Caco-2 (cell line): ENCODE measurements at regions of chr12 and their contacts with region 1.

Region 1: DNA sequence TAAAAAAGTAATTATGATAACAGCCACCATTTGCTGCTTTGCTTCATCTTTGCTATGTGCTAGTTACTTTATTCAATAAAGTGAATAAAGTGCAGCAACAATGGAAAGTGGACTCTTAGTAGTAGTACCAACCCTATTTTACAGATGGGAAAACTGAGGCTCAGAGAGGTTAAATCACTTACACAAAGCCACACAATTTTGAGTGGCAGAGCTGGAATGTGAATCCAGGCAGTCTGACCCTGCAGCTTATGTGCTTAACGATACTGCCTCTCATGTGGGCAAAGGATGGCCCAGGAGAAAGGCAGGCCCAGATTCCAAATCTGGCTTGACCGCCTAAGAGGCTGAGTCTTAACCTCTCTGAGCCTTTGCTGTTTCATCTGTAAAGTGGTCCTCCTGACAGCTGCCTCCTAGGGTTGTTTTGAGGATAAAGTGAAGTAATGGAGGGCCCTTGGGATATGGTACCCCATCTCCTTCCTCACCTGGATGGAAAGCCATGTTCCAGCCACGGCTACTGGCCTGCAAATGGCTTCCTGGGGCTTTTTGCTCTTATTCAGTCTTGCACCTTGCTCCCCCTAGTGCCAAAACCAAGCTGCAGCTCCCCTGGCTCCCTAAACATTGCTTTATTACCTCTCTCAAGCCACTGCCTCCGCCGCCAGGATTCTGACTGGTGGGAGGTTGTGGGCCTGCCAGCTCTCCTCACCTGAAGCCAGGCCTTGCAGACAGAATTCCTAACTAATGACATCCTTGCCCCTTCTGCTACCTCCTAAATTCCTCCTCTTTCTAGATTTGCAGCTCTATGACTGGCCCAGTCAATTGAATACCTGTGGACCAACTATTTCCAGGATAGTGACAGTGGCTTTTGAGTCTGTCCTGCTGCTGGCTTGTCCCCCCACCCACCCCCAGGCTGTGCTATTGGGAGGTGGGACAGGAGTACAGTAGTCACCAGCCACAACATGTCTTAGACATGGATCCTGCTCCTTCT is 283.3 kb upstream of the PWP1 start:
- DNase-seq: peak; percentile 59 to 66
- H3K4me3 ChIP-seq: no peak overlapping the region
- H3K4me3 Mint-ChIP-seq: no peak overlapping the region
- H3K27ac Mint-ChIP-seq: no peak overlapping the region
- H3K4me1 ChIP-seq: no peaks in the 10 kb centered on the region
- H3K4me1 Mint-ChIP-seq: no peaks in the 10 kb centered on the region
- H3K27me3 ChIP-seq: no peaks in the 10 kb centered on the region
- H3K27me3 Mint-ChIP-seq: peaks cover 3% of the 10 kb centered on the region
- CTCF ChIP-seq: peak; percentile 58 to 67

Region 2: DNA sequence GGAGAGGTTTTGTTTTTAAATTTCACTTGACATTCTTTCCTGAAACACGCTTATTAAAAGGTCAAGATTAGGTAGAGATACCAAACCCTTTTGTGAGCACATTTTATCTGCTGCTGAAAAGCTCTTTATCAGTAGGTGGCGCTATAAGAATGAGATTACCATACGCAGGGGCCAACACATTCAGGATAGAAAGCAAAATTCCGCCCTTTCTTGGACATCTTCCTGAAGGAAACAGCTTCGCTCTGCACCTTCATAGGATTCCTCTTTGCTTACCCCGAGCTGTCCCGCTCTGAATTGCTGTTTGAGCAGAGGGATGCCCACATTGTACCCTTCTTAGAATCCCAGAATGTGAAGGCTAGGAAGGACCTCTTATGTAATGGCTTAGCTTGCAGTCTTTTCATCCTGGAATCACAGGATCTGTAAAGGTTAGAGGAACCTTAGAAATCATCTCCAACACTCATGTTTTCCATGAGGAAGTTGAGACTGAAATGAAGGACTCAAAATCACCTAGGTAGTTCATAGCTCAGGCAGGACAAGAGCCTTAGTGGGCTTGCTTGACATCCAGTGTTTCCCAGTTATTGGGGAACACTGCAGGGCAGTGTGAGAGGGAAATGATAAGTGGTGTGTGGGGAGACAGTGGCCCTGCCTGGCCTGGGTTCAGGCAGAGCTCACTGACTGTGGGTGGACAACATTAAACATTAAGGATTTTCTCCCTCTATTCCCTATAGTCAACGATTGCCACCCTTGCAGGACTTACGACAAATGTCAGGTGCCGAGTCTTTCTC is 270.3 kb before region 1 on chr12:
- CTCF ChIA-PET with region 1: interaction called, 8 read pairs
- POLR2A ChIA-PET with region 1: no interaction called
- intact Hi-C with region 1: loop called (anchors 1 kb)
- DNase-seq: peak in 1 of 2 experiments; percentile 60
- H3K4me3 ChIP-seq: no peak overlapping the region
- H3K4me3 Mint-ChIP-seq: no peak overlapping the region
- H3K27ac Mint-ChIP-seq: no peak overlapping the region
- H3K4me1 ChIP-seq: no peaks in the 10 kb centered on the region
- H3K4me1 Mint-ChIP-seq: no peaks in the 10 kb centered on the region
- H3K27me3 ChIP-seq: no peaks in the 10 kb centered on the region; the same call in 1 of the 2 replicates
- H3K27me3 Mint-ChIP-seq: peaks cover 3% of the 10 kb centered on the region
- CTCF ChIP-seq: peak; percentile 74 to 80

Region 3: DNA sequence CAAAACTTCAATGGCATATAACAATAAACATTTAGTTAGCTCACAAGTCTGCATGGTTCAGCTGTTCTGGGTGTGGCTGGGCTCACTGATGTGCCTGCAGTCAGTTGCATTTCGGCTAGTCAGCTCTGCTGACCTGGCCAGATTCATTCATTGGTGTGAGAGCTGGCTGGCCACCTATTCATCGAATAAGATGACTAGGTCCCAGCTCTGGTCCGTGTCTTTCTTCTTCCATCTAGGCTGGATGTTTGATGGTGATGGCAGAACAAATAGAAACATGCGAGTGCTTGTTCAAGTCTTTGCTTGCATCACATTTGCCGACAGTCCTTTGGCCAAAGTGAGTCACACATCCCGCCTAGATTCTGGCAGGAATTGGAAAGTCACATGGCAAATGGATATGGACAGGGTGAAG is 105.6 kb before region 1 on chr12:
- CTCF ChIA-PET with region 1: interaction called, 10 read pairs
- POLR2A ChIA-PET with region 1: no interaction called
- intact Hi-C with region 1: no loop called
- DNase-seq: no peak
- H3K4me3 ChIP-seq: no peak overlapping the region
- H3K4me3 Mint-ChIP-seq: no peak overlapping the region
- H3K27ac Mint-ChIP-seq: no peak overlapping the region
- H3K4me1 ChIP-seq: no peaks in the 10 kb centered on the region
- H3K4me1 Mint-ChIP-seq: no peaks in the 10 kb centered on the region
- H3K27me3 ChIP-seq: no peaks in the 10 kb centered on the region
- H3K27me3 Mint-ChIP-seq: peaks cover 15% of the 10 kb centered on the region
- CTCF ChIP-seq: no peak